ENCODE measurements at regions of chrX and their contacts with region 1.

Region 1: GRCh38 chrX:7088968-7089615 is 58.4 kb upstream of the STS start:
- DNase-seq: no peak
- ATAC-seq: peak; percentile 70
- H3K4me3 ChIP-seq: no peak overlapping the region
- H3K27ac ChIP-seq: no peak overlapping the region
- H3K4me1 ChIP-seq: peaks cover 12% of the 10 kb centered on the region
- H3K27me3 ChIP-seq: no peaks in the 10 kb centered on the region
- CTCF ChIP-seq: peak; percentile 46
- EP300 ChIP-seq: no peak
- POLR2A ChIP-seq: no peak
- RAD21 ChIP-seq: no peak

Region 2: DNA sequence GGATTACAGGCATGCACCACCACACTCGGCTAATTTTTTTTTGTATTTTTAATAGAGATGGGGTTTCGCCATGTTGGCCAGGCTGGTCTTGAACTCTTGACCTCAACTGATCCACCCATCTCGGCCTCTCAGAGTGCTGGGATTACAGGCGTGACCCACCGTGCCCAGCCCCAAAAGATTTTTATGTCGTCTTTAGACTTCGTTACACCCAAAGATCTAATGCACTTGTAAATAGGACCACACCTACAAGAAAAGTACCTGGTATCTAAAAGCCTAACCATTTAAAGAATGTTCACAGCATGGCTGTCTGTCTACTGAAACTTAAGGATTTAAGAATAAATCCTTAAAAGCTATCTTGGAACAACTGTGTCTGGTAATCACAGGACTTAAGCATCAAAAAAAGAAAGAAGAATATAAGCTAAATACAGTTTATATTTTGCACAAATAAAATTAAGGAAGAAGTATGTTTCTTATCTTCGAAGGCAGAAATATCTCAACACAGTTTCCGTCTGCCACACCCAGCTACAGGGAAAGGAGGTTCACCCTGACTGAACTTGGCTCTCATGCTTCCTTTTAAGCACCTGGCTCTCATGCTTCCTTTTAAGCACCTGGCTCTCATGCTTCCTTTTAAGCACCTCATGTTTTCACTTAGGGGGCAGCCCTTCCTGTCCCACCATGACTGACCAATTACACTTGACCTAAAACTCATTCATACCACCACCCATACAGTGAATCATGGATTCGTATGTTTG is 33.5 kb before region 1 on chrX:
- CTCF ChIA-PET with region 1: no interaction called
- POLR2A ChIA-PET with region 1: no interaction called
- in situ Hi-C with region 1: no loop called
- intact Hi-C with region 1: loop called (anchors 1 kb)
- DNase-seq: no peak
- ATAC-seq: no peak
- H3K4me3 ChIP-seq: no peak overlapping the region
- H3K27ac ChIP-seq: no peak overlapping the region
- H3K4me1 ChIP-seq: no peaks in the 10 kb centered on the region
- H3K27me3 ChIP-seq: no peaks in the 10 kb centered on the region
- CTCF ChIP-seq: no peak
- EP300 ChIP-seq: no peak
- POLR2A ChIP-seq: no peak
- RAD21 ChIP-seq: no peak

Region 3: GRCh38 chrX:7191681-7192110 is 102.6 kb after region 1 on chrX:
- CTCF ChIA-PET with region 1: no interaction called
- POLR2A ChIA-PET with region 1: no interaction called
- in situ Hi-C with region 1: no loop called
- intact Hi-C with region 1: no loop called
- DNase-seq: peak; percentile 5
- ATAC-seq: peak; percentile 90
- H3K4me3 ChIP-seq: no peak overlapping the region
- H3K27ac ChIP-seq: no peak overlapping the region
- H3K4me1 ChIP-seq: no peaks in the 10 kb centered on the region
- H3K27me3 ChIP-seq: no peaks in the 10 kb centered on the region
- CTCF ChIP-seq: peak; percentile 39
- EP300 ChIP-seq: no peak
- POLR2A ChIP-seq: no peak
- RAD21 ChIP-seq: no peak

Region 4: GRCh38 chrX:7225338-7225737 is 136.2 kb after region 1 on chrX:
- CTCF ChIA-PET with region 1: no interaction called
- POLR2A ChIA-PET with region 1: no interaction called
- in situ Hi-C with region 1: no loop called
- intact Hi-C with region 1: no loop called
- DNase-seq: no peak
- ATAC-seq: no peak
- H3K4me3 ChIP-seq: no peak overlapping the region
- H3K27ac ChIP-seq: no peak overlapping the region
- H3K4me1 ChIP-seq: no peaks in the 10 kb centered on the region
- H3K27me3 ChIP-seq: no peaks in the 10 kb centered on the region
- CTCF ChIP-seq: no peak
- EP300 ChIP-seq: no peak
- POLR2A ChIP-seq: no peak
- RAD21 ChIP-seq: no peak

Measured in HepG2 (cell line).